ENCODE measurements at regions of chr5 and their contacts with region 1.

Region 1: DNA sequence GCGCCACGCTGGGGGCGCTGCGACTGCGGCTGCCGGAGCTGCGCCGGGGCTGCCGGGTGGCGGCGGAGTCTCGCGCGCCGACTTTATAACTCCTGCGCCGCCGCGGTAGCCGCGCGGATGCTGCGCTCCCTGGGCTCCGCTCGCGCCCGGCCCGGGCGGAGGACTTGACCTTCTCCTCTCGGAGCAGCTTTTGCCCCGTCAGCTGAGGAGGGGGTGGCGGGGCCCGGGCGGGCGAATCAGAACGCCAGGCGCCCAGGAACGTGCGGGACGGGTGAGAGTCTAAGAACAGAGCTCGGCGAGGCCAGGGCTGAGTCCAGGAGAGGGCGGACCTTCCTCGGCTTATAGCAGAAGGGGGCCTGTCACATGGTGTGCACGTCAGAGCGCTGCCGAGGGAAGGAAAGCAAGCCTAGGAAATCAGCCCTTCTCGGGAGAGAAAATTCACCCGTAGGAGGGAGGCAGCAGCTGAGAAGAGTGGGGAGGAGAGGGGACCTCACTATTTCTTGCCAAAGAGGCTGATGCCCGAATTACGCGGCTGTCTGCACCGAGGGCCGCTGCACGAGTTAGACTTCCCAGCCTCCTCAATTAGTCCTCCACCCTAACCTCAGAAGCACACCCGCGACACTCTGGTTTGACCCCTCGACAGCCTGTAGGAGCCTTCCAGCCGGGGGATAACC is at the start of gene FOXD1:
- DNase-seq: peak; percentile 91
- H3K4me3 ChIP-seq: peak within 1 kb of the TSS; percentile 82
- CTCF ChIP-seq: peak; percentile 26

Region 2: GRCh38 chr5:73088026-73088425 is 360.6 kb before region 1 on chr5:
- CTCF ChIA-PET with region 1: interaction called, 19 read pairs
- POLR2A ChIA-PET with region 1: no interaction called
- DNase-seq: no peak
- H3K4me3 ChIP-seq: no peak overlapping the region
- CTCF ChIP-seq: no peak

Region 3: GRCh38 chr5:73233347-73234200 is 215.0 kb before region 1 on chr5:
- CTCF ChIA-PET with region 1: interaction called, 23 read pairs
- POLR2A ChIA-PET with region 1: interaction called, 4 read pairs
- DNase-seq: no peak
- H3K4me3 ChIP-seq: no peak overlapping the region
- CTCF ChIP-seq: peak; percentile 34

Region 4: DNA sequence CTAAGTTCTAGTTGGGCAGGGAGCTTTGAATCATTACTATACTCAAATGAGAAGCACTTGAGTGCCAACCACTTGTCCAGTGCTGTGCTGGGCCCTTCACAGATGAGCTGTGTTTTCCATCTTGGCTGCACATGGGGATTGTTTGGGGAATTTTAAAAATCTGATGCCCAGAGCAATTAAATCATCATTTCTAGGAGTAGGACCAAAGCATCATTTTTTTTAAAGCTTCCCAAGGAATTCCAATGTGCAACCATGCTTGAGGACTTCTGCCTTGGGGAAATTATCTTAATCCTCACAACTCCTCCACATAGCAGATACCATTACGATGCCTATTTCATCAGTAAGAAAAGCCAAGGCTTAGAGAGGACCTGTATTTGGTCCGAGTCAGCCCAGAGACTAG is 144.2 kb before region 1 on chr5:
- CTCF ChIA-PET with region 1: interaction called, 72 read pairs
- POLR2A ChIA-PET with region 1: interaction called, 5 read pairs
- DNase-seq: no peak
- H3K4me3 ChIP-seq: no peak overlapping the region
- CTCF ChIP-seq: no peak

Region 5: GRCh38 chr5:73321757-73322436 is 126.7 kb before region 1 on chr5:
- CTCF ChIA-PET with region 1: interaction called, 14 read pairs
- POLR2A ChIA-PET with region 1: interaction called, 12 read pairs
- DNase-seq: peak; percentile 91
- H3K4me3 ChIP-seq: no peak overlapping the region
- CTCF ChIP-seq: no peak

Region 6: GRCh38 chr5:73365301-73365853 is 83.2 kb before region 1 on chr5:
- CTCF ChIA-PET with region 1: interaction called, 15 read pairs
- POLR2A ChIA-PET with region 1: interaction called, 7 read pairs
- DNase-seq: no peak
- H3K4me3 ChIP-seq: no peak overlapping the region
- CTCF ChIP-seq: no peak

Region 7: GRCh38 chr5:73437101-73437776 is 11.4 kb before region 1 on chr5:
- CTCF ChIA-PET with region 1: interaction called, 12 read pairs
- POLR2A ChIA-PET with region 1: interaction called, 16 read pairs
- DNase-seq: no peak
- H3K4me3 ChIP-seq: peak overlapping the region; percentile 55
- CTCF ChIP-seq: peak; percentile 66

Region 8: GRCh38 chr5:73654171-73654811 is 205.7 kb after region 1 on chr5:
- CTCF ChIA-PET with region 1: no interaction called
- POLR2A ChIA-PET with region 1: no interaction called
- DNase-seq: no peak
- H3K4me3 ChIP-seq: no peak overlapping the region
- CTCF ChIP-seq: no peak

Measured in AG04449 (cell line).